ENCODE measurements at regions of chr4 and their contacts with region 1.

Region 1: DNA sequence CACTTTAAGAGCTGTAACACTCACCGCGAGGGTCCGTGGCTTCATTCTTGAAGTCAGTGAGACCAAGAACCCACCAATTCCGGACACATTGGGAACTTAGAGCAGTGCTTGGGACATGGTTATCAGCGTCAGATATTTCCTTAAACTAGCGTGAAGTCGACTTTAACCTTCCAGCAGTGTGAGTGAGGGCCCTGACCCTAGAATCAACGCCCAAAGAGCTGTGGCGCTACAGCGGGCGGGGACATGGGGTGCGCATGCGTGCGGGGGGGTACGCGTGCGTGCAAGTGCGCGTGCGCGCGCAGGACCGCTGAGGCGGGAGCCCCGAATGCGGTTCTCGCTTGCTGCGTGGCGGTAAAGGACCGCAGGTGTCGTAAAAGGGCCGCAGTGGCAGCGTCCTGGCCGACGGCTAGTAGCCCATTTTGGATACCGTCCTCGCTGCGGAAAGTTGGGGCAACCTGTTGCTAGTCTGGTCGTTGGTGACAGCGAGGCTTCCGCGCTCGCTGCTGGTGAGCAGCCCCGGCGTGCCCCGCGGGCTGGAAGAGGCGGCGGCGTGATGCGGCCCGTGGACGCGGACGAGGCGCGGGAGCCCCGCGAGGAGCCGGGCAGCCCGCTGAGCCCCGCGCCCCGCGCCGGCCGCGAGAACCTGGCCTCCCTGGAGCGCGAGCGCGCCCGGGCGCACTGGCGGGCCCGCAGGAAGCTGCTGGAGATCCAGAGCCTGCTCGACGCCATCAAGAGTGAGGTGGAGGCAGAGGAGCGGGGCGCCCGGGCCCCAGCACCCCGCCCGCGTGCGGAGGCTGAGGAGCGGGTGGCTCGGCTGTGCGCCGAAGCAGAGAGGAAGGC is 19.8 kb upstream of the S100P start:
- DNase-seq: peak; percentile 91
- ATAC-seq: peak; percentile 74
- H3K4me3 ChIP-seq: peak overlapping the region; percentile 72
- H3K27ac ChIP-seq: peak overlapping the region; percentile 78
- H3K4me1 ChIP-seq: peaks cover 24% of the 10 kb centered on the region
- H3K27me3 ChIP-seq: no peaks in the 10 kb centered on the region
- CTCF ChIP-seq: no peak

Region 2: DNA sequence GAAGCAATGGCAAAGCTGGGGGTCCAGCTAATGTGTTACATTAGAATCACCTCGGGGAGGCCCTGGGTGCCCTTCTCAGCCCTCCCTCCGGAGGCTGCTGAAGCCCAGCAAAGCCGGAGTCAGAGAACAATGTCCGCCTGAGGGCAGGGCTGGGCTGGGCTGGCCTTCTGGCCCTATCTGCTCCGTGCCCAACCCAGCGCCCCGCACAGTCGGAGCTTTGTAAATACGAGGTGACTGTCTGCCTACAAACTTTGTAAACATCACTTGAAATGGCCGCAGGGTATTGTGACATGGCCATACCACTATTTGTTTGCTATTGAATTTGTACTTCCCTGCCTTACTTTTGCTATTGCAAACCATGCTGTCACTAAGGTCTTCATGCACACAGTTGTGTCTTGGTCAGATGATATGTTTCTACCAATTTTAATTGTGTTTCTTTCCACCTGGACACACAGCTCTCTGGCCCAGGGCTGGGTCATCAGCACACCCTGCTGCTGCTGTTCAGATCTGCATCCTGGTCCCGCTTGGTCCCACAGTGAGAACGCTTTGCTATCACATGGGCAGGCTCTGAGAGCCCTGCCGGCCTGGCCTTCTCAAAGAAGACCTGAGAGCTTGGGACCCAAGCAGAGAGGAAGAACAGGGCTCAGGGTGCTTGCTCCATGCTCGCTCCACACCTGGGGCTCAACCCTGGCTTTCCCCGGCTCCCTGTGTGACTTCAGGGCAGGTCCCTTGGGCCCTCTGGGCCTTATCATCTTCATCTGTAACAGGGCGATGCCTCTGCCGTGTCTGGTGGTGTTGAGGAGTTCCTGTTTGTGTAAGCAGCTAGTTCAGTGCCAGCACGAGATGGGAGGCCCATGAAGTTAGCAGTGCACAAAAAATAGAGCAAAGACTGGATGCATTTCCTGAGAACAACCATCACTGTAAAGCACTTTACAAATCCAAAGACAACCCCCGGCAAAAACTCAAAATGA is 22.1 kb after region 1 on chr4:
- CTCF ChIA-PET with region 1: interaction called, 8 read pairs
- POLR2A ChIA-PET with region 1: interaction called, 4 read pairs
- intact Hi-C with region 1: loop called (anchors 2 kb)
- DNase-seq: peak; percentile 92
- ATAC-seq: peak; percentile 77
- H3K4me3 ChIP-seq: peak overlapping the region; percentile 62
- H3K27ac ChIP-seq: peak overlapping the region; percentile 96
- H3K4me1 ChIP-seq: peaks cover 47% of the 10 kb centered on the region
- H3K27me3 ChIP-seq: no peaks in the 10 kb centered on the region
- CTCF ChIP-seq: peak; percentile 41

Region 3: DNA sequence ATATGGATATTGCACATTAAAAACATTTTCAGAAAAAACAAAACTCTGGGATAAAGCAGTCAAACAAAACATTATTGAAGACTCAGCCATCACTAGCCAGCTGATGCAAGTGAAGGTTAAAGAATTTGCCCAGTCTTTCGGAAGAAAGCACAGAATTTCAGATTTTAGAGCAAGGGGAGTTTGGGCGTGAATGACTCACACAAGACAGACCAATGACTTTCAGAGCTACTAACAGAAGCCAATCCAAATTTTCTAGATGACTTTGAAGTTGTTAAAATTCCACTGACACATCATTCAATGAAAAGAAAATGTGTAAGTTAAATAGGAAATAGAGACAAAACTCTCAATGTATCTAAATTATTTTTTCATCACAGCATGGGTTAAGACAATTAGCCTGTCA is 31.8 kb after region 1 on chr4:
- CTCF ChIA-PET with region 1: interaction called, 4 read pairs
- POLR2A ChIA-PET with region 1: no interaction called
- intact Hi-C with region 1: loop called (anchors 1 kb)
- DNase-seq: no peak
- ATAC-seq: no peak
- H3K4me3 ChIP-seq: no peak overlapping the region
- H3K27ac ChIP-seq: no peak overlapping the region
- H3K4me1 ChIP-seq: peaks cover 14% of the 10 kb centered on the region
- H3K27me3 ChIP-seq: no peaks in the 10 kb centered on the region
- CTCF ChIP-seq: no peak

Region 4: DNA sequence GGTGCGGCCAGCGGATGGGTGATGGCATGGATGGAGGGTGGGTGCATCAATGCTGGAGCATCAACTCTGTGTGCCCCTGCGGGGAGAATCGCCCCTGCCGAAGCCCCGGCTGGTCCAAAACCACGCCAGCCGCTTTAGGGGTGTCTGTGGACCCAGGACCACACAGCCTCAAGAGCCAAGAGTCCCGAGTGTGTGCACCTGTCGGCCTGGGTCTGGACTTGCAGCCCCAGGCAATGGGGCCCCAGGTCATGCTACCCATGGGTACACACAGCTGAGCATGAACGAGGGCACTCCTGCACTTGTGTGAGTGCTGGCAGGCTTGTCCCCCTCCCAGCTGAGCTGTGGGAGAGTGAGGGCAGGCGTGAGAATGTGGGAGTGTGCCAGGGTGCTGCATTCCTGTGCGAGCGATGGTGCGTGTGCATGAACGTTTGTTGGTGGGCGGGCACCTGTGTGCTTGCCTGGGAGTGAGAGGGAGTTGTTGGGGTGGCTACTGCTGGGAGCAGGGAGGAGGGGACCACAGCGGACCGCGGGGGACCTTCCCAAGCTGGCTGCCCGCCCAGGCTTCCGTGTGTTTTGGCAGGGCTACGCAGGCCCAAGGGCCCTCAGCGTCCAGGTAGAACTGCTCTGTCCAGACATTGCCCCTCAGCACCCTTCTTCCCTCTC is 72.9 kb after region 1 on chr4:
- CTCF ChIA-PET with region 1: no interaction called
- POLR2A ChIA-PET with region 1: interaction called, 10 read pairs
- intact Hi-C with region 1: no loop called
- DNase-seq: peak; percentile 66
- ATAC-seq: peak; percentile 45
- H3K4me3 ChIP-seq: no peak overlapping the region
- H3K27ac ChIP-seq: peak overlapping the region; percentile 88
- H3K4me1 ChIP-seq: peaks cover 55% of the 10 kb centered on the region
- H3K27me3 ChIP-seq: no peaks in the 10 kb centered on the region
- CTCF ChIP-seq: no peak

Region 5: GRCh38 chr4:7042697-7043464 is 369.0 kb after region 1 on chr4 and contains the start of gene TADA2B:
- CTCF ChIA-PET with region 1: no interaction called
- POLR2A ChIA-PET with region 1: no interaction called
- intact Hi-C with region 1: no loop called
- DNase-seq: peak; percentile 95
- ATAC-seq: peak; percentile 82
- H3K4me3 ChIP-seq: peak within 1 kb of the TSS; percentile 98
- H3K27ac ChIP-seq: peak within 1 kb of the TSS; percentile 18; the same call in 1 of the 2 replicates
- H3K4me1 ChIP-seq: peaks cover 33% of the 10 kb centered on the region
- H3K27me3 ChIP-seq: no peaks in the 10 kb centered on the region
- CTCF ChIP-seq: no peak
- total RNA-seq, gene TADA2B: 14.7 and 16.5 TPM in 2 replicates

Measured in PC-3 (cell line).